B cell (primary cell): ENCODE measurements at regions of chr10 and their contacts with region 1.

Region 1: DNA sequence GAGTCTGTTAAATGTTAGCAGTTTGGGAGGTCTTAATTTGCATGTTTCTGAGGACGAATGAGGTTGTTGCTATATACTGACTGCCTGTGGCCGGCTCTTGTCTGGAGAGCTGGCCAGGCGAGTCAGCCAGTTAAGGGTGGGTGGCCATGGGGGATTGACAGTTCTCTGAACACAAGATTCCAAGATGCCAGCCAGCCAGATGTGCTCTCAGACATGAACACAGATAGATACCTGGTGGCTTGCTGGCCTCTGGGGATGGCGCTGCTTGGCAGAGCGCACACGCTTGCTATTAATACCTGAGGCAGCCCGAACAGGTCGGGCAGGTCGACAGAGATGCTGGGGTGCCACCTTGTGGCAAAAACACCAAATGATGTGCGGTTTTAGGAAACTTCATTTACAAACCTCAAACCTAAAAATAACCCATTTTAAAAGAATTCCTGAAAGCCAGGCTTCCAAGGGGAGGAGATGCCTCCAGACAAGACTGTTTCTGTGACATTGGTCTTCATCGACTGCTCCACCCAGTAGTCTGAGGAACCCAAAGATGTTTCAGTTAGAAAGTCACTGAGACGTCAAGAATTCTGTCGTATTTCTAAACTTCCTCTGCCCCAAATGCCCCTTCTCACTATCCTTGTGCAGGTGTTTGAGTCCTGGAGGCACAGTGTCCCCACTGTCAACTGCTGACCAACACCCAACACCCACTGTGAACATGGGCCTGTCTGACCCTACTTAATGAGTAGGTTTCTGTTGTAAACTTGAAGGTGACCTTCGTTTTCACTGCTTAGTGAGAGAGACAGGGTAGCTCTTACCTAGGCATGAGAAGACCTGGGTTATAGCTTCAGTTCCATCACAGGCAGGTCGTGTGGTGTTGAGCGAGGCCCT is 123.4 kb downstream of the NT5C2 start:
- DNase-seq: peak; percentile 82
- ATAC-seq: peak; percentile 80
- H3K4me3 ChIP-seq: peak overlapping the region in 1 of 5 experiments; percentile 39
- H3K4me3 Mint-ChIP-seq: peak overlapping the region; percentile 64
- H3K27ac ChIP-seq: peak overlapping the region; percentile 50 to 73
- H3K27ac Mint-ChIP-seq: peak overlapping the region; percentile 67
- H3K4me1 ChIP-seq: peaks cover 26% of the 10 kb centered on the region in 2 donors
- H3K4me1 Mint-ChIP-seq: peaks cover 33% of the 10 kb centered on the region
- H3K27me3 ChIP-seq: no peaks in the 10 kb centered on the region
- H3K27me3 Mint-ChIP-seq: no peaks in the 10 kb centered on the region
- CTCF ChIP-seq: peak; percentile 80

Region 2: GRCh38 chr10:103333925-103334520 is 264.3 kb after region 1 on chr10:
- CTCF ChIA-PET with region 1: no interaction called
- POLR2A ChIA-PET with region 1: no interaction called
- intact Hi-C with region 1: loop called (anchors 10 kb)
- DNase-seq: peak; percentile 36
- ATAC-seq: no peak
- H3K4me3 ChIP-seq: no peak overlapping the region
- H3K4me3 Mint-ChIP-seq: no peak overlapping the region
- H3K27ac ChIP-seq: no peak overlapping the region
- H3K27ac Mint-ChIP-seq: no peak overlapping the region
- H3K4me1 ChIP-seq: no peaks in the 10 kb centered on the region
- H3K4me1 Mint-ChIP-seq: no peaks in the 10 kb centered on the region
- H3K27me3 ChIP-seq: no peaks in the 10 kb centered on the region
- H3K27me3 Mint-ChIP-seq: no peaks in the 10 kb centered on the region
- CTCF ChIP-seq: peak; percentile 81